Activated CD4-positive, alpha-beta T cell treated with anti-CD3 and anti-CD28 coated beads for 36 hours (primary cell): ENCODE measurements at regions of chr12 and their contacts with region 1.

Region 1: GRCh38 chr12:25436203-25437030 is 116.7 kb downstream of the LMNTD1 start:
- DNase-seq: peak; percentile 11
- ATAC-seq: peak; percentile 70
- H3K4me3 Mint-ChIP-seq: peak overlapping the region; percentile 18
- H3K27ac Mint-ChIP-seq: no peak overlapping the region
- H3K4me1 Mint-ChIP-seq: peaks cover 4% of the 10 kb centered on the region
- H3K27me3 Mint-ChIP-seq: peaks cover 2% of the 10 kb centered on the region

Region 2: GRCh38 chr12:25423355-25424050 is 12.9 kb before region 1 on chr12:
- CTCF ChIA-PET with region 1: interaction called, 11 read pairs
- POLR2A ChIA-PET with region 1: no interaction called
- intact Hi-C with region 1: no loop called
- DNase-seq: no peak
- ATAC-seq: no peak
- H3K4me3 Mint-ChIP-seq: no peak overlapping the region
- H3K27ac Mint-ChIP-seq: no peak overlapping the region
- H3K4me1 Mint-ChIP-seq: no peaks in the 10 kb centered on the region
- H3K27me3 Mint-ChIP-seq: no peaks in the 10 kb centered on the region

Region 3: DNA sequence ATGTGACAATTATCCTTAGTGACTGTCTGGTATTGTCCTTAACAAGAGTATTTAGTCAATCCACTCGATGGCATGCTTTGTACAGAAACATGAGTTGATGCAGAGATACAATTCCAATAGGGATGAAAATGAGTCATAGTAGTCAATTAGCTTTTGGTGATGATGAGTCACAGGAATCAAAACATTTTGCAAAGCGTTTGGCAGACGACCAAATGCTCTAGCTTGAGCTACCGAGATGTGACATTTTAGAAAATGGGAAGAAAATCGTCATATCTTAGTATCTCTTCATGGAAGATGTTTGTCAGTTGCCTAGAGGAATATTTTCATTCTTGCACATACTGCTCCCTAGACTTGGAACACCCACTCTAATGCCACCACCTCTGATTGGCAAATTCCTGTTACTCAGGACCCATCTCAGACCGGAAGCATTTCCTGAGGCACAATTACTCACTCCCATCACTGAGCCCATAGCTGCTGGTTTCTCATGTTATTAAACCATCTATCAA is 21.7 kb after region 1 on chr12:
- CTCF ChIA-PET with region 1: no interaction called
- POLR2A ChIA-PET with region 1: no interaction called
- intact Hi-C with region 1: no loop called
- DNase-seq: no peak
- ATAC-seq: no peak
- H3K4me3 Mint-ChIP-seq: no peak overlapping the region
- H3K27ac Mint-ChIP-seq: no peak overlapping the region
- H3K4me1 Mint-ChIP-seq: no peaks in the 10 kb centered on the region
- H3K27me3 Mint-ChIP-seq: peaks cover 3% of the 10 kb centered on the region

Region 4: DNA sequence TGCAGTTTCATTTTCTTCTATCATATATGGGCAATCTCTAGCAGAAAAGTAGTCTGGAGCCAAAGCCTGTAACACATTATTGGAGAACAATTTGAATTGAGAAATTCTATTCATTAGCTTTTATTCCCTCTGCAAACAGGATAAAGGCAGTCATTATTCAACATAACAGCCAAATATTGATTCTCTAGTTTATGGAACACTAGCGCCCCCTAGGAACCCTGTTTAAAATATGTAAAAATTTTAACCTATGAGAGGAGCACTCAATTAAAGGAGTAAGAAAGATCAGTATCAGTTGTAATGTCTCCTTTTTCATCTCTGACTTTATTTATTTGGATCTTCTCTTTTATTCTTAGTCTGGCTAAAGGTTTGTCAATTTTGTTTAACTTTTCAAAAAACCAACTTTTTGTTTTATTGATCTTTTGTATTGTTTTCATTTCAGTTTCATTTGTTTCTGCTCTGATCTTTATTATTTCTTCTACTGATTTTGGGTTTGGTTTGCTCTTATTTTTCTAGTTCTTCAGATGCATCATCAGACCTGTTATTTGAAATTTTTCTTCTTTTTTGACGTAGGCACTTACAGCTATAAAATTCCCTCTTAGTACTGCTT is 121.5 kb after region 1 on chr12:
- CTCF ChIA-PET with region 1: interaction called, 3 read pairs
- POLR2A ChIA-PET with region 1: no interaction called
- intact Hi-C with region 1: loop called (anchors 2 to 5 kb)
- DNase-seq: peak; percentile 41
- ATAC-seq: no peak
- H3K4me3 Mint-ChIP-seq: no peak overlapping the region
- H3K27ac Mint-ChIP-seq: no peak overlapping the region
- H3K4me1 Mint-ChIP-seq: peaks cover 11% of the 10 kb centered on the region
- H3K27me3 Mint-ChIP-seq: no peaks in the 10 kb centered on the region

Region 5: GRCh38 chr12:25806271-25806670 is 369.9 kb after region 1 on chr12:
- CTCF ChIA-PET with region 1: no interaction called
- POLR2A ChIA-PET with region 1: no interaction called
- intact Hi-C with region 1: loop called in 1 of 2 experiments (anchors 10 kb)
- DNase-seq: peak; percentile 48
- ATAC-seq: peak; percentile 95
- H3K4me3 Mint-ChIP-seq: no peak overlapping the region
- H3K27ac Mint-ChIP-seq: no peak overlapping the region
- H3K4me1 Mint-ChIP-seq: peaks cover 13% of the 10 kb centered on the region
- H3K27me3 Mint-ChIP-seq: no peaks in the 10 kb centered on the region

Region 6: GRCh38 chr12:26017484-26018206 is 581.2 kb after region 1 on chr12:
- CTCF ChIA-PET with region 1: interaction called, 7 read pairs
- POLR2A ChIA-PET with region 1: no interaction called
- intact Hi-C with region 1: loop called in 1 of 2 experiments (anchors 1 kb)
- DNase-seq: peak; percentile 23
- ATAC-seq: no peak
- H3K4me3 Mint-ChIP-seq: no peak overlapping the region
- H3K27ac Mint-ChIP-seq: no peak overlapping the region
- H3K4me1 Mint-ChIP-seq: no peaks in the 10 kb centered on the region
- H3K27me3 Mint-ChIP-seq: no peaks in the 10 kb centered on the region

Region 7: DNA sequence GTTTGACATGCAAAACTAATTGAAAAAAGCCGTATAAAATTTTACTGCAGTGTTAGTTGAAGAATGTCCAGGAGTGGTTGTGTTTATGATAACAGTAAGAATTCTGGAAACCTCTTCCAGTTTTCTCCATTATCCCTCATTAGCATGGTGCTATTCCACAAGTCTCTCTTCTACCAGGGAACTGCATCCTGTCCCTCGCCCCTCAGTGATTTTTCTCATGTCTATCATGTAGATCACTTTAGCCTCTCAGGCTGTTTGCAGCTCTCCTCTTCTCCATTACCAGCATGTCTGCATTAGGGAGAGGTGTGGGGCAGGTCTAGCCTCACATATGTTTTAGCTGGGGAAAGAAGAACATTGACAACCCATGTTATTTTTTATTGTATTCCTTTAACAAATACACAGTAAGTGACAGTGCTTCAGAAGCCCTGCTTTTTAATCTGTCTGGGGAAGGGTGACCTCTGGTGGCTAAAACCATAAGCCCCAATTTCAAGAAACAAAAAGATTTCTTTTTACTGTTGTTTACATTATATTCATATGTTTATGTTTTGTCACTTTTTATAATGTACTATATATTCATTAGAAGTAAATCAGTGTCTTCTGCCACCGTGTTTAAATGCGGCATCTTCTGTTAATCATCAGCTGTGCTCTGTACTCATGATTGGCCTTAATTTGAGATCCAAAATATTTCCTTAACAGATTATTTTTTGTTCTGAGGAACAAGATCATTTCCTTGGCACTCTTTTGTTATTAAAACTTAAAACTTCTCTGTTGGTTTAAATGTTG is 592.7 kb after region 1 on chr12:
- CTCF ChIA-PET with region 1: interaction called, 10 read pairs
- POLR2A ChIA-PET with region 1: no interaction called
- intact Hi-C with region 1: loop called (anchors 1 kb)
- DNase-seq: peak; percentile 44
- ATAC-seq: no peak
- H3K4me3 Mint-ChIP-seq: no peak overlapping the region
- H3K27ac Mint-ChIP-seq: no peak overlapping the region
- H3K4me1 Mint-ChIP-seq: no peaks in the 10 kb centered on the region
- H3K27me3 Mint-ChIP-seq: peaks cover 2% of the 10 kb centered on the region